ENCODE measurements at regions of chr17 and their contacts with region 1.

Region 1: GRCh38 chr17:16243811-16244567 is 27.0 kb downstream of the PIGL start:
- DNase-seq: no peak
- H3K4me3 Mint-ChIP-seq: no peak overlapping the region
- H3K27ac Mint-ChIP-seq: peak overlapping the region; percentile 55
- H3K4me1 Mint-ChIP-seq: peaks cover 17% of the 10 kb centered on the region
- H3K27me3 Mint-ChIP-seq: no peaks in the 10 kb centered on the region

Region 2: DNA sequence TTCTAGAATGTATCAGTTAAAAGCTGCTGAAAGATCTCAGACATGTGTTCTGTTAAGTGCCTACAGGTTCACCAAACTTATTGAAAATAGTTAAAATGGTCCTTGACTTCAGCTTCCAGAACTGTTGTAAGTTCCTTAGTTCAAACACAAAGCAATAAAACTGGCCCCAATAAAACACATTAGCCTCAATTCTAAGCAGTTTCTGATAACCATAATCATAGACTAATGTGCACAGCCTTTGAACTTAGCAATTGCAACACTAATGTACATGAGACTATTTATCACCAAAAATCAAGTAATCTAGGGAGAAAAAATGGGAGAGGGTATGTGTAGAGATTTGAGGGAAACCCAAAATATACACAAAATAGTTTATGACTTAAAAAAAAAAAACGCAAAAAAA is 11.6 kb before region 1 on chr17:
- intact Hi-C with region 1: loop called (anchors 1 kb)
- DNase-seq: no peak
- H3K4me3 Mint-ChIP-seq: no peak overlapping the region
- H3K27ac Mint-ChIP-seq: no peak overlapping the region
- H3K4me1 Mint-ChIP-seq: peaks cover 18% of the 10 kb centered on the region
- H3K27me3 Mint-ChIP-seq: no peaks in the 10 kb centered on the region

Measured in activated T-helper 2 cell treated with anti-CD3 and anti-CD28 coated beads, Interferon-gamma antibody, Interleukin-2, Interleukin-4, amounts not matched to agents 10 μg/mL and 5 μg/mL and 100 μg/mL, durations not matched to agents 14 hours and 24 hours and 36 hours (primary cell).